AG04450 (cell line): ENCODE measurements at regions of chr2 and their contacts with region 1.

Region 1: DNA sequence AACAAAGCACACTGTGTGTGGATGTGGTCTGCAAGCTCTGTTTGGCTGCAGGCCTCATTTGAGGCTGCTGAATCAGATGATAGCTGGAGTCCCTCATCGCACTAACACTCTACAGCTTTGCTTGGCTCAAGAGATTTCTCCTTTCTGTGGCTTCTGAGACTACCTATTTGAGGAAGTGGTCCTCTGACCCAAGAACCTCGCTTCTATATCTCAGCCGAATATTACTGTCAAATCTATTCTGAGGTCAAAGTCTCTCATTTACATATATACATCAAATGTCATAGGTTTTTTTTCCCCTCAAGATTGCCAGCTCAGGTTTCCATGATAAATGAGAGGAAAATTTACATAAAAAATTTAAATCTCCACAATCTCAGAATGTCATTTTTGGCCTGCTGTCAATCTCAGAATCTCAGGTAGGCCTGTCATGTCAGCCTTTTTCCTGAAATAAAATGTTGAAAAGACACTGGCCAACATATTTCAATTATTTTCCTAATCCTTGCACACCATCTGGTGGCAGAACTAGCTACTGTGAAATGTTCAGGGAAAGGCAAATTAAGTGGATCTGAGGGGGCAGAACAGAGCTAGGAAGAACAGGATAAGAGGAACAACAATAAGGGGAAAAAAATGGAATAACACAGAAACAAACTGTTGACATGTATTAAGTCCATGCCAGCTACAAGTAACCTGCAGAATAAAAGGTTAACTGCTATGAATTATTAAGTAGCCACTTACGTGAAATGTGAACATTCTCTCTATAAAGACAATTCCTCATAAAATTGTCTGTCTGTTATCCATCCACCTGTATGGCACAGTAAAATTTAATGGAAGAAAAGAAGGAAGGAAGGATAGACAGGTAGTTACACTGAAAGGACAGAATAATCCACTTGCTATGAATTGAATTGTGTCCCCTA is 39.3 kb downstream of the AP1S3 start:
- DNase-seq: no peak
- H3K4me3 ChIP-seq: no peak overlapping the region
- H3K27ac ChIP-seq: no peak overlapping the region
- H3K27me3 ChIP-seq: no peaks in the 10 kb centered on the region
- CTCF ChIP-seq: peak; percentile 78

Region 2: GRCh38 chr2:223247136-223247535 is 550.9 kb before region 1 on chr2:
- CTCF ChIA-PET with region 1: interaction called, 38 read pairs
- POLR2A ChIA-PET with region 1: no interaction called
- DNase-seq: no peak
- H3K4me3 ChIP-seq: no peak overlapping the region
- H3K27ac ChIP-seq: no peak overlapping the region
- H3K27me3 ChIP-seq: no peaks in the 10 kb centered on the region
- CTCF ChIP-seq: peak; percentile 62

Region 3: DNA sequence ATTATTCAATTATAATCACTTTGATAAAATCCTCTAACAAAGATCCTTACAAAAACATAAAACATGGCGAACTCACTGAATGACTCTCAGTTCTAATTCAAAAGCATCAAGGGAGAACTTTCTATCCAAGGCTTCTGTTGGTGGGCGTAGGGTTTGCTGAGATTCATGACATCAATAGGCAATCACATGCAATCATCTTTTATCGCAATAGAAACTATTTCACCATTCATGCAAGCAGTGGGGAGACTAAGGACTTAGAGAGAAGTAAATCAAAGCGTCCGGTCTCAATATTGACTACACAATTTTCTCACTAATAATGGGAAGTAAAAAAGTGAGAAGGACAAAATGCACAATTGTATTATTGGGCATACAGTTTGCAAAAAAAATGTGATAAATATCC is 364.6 kb before region 1 on chr2:
- CTCF ChIA-PET with region 1: no interaction called
- POLR2A ChIA-PET with region 1: no interaction called
- DNase-seq: no peak
- H3K4me3 ChIP-seq: no peak overlapping the region
- H3K27ac ChIP-seq: no peak overlapping the region
- H3K27me3 ChIP-seq: no peaks in the 10 kb centered on the region
- CTCF ChIP-seq: no peak

Region 4: GRCh38 chr2:223459328-223459939 is 338.6 kb before region 1 on chr2:
- CTCF ChIA-PET with region 1: interaction called, 39 read pairs
- POLR2A ChIA-PET with region 1: no interaction called
- DNase-seq: no peak
- H3K4me3 ChIP-seq: no peak overlapping the region
- H3K27ac ChIP-seq: no peak overlapping the region
- H3K27me3 ChIP-seq: no peaks in the 10 kb centered on the region
- CTCF ChIP-seq: peak; percentile 44

Region 5: GRCh38 chr2:223674998-223675609 is 123.0 kb before region 1 on chr2:
- CTCF ChIA-PET with region 1: interaction called, 65 read pairs
- POLR2A ChIA-PET with region 1: no interaction called
- DNase-seq: no peak
- H3K4me3 ChIP-seq: no peak overlapping the region
- H3K27ac ChIP-seq: no peak overlapping the region
- H3K27me3 ChIP-seq: no peaks in the 10 kb centered on the region
- CTCF ChIP-seq: peak; percentile 81

Region 6: DNA sequence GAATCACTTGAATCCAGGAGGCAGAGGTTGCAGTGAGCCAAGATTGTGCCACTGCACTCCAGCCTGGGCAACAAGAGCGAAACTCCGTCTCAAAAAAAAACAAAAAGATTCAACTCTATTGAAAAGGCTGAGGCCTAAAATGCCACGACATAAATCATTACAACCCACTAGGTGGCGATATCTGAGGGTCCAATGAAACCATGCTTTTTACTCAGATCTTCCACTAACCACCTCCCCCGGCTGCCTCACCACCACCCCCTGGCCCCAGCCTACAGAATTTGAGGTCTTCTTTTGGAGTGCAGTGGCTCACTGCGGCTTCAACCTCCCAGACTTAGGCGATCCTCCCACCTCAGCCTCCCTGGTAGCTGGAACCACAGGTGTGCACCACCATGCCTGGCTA is 18.2 kb before region 1 on chr2:
- CTCF ChIA-PET with region 1: interaction called, 12 read pairs
- POLR2A ChIA-PET with region 1: no interaction called
- DNase-seq: no peak
- H3K4me3 ChIP-seq: no peak overlapping the region
- H3K27ac ChIP-seq: no peak overlapping the region
- H3K27me3 ChIP-seq: no peaks in the 10 kb centered on the region
- CTCF ChIP-seq: peak; percentile 30

Region 7: GRCh38 chr2:223868005-223868404 is 69.9 kb after region 1 on chr2:
- CTCF ChIA-PET with region 1: no interaction called
- POLR2A ChIA-PET with region 1: no interaction called
- DNase-seq: no peak
- H3K4me3 ChIP-seq: no peak overlapping the region
- H3K27ac ChIP-seq: no peak overlapping the region
- H3K27me3 ChIP-seq: no peaks in the 10 kb centered on the region
- CTCF ChIP-seq: no peak